CD4-positive, alpha-beta T cell (primary cell): ENCODE measurements at regions of chr17 and their contacts with region 1.

Region 1: DNA sequence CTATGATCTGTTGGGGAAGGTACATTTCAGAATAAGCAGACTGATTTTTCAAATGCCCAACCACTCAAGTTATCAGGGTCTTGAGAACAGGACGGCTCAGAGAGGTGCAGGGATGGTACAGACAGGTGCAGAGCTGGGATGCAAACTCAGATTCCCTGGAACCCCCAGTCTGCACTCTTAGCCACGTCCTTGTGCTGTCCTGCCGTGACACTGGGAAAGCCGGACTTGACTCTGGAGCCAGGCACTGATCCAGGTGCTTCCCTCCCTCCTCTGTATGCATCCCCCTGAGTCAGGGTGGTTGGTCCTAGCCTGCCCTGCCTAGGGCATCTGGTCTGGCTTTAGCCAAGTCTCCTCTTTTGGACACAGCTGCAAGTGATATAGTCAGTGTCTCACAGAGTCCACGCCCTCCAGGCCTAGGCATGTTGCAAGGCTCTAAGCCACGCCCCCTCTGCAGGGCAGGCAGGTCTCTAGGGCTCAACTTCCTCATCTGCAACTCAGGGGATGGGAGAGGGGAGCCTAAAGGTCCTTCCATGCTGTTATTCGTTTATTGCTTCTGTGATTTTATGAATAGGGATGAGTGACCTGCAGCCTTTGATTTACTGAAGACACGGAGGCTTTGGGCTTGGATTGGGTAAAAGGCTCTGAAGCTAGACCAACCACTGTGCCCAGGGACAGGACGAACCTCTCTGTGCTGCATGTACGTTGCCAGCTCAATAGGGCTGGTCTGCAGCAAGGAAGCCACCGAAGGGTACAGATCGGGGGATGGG is 97.3 kb downstream of the SDK2 start:
- DNase-seq: peak in 12 of 14 experiments; percentile 4 to 64 (median 36)
- ATAC-seq: peak; percentile 79
- H3K4me3 ChIP-seq: no peak overlapping the region
- H3K4me3 Mint-ChIP-seq: no peak overlapping the region
- H3K27ac ChIP-seq: no peak overlapping the region
- H3K27ac Mint-ChIP-seq: no peak overlapping the region
- H3K4me1 ChIP-seq: no peaks in the 10 kb centered on the region
- H3K4me1 Mint-ChIP-seq: peaks cover 32% of the 10 kb centered on the region
- H3K27me3 ChIP-seq: no peaks in the 10 kb centered on the region
- H3K27me3 Mint-ChIP-seq: no peaks in the 10 kb centered on the region
- CTCF ChIP-seq: no peak

Region 2: DNA sequence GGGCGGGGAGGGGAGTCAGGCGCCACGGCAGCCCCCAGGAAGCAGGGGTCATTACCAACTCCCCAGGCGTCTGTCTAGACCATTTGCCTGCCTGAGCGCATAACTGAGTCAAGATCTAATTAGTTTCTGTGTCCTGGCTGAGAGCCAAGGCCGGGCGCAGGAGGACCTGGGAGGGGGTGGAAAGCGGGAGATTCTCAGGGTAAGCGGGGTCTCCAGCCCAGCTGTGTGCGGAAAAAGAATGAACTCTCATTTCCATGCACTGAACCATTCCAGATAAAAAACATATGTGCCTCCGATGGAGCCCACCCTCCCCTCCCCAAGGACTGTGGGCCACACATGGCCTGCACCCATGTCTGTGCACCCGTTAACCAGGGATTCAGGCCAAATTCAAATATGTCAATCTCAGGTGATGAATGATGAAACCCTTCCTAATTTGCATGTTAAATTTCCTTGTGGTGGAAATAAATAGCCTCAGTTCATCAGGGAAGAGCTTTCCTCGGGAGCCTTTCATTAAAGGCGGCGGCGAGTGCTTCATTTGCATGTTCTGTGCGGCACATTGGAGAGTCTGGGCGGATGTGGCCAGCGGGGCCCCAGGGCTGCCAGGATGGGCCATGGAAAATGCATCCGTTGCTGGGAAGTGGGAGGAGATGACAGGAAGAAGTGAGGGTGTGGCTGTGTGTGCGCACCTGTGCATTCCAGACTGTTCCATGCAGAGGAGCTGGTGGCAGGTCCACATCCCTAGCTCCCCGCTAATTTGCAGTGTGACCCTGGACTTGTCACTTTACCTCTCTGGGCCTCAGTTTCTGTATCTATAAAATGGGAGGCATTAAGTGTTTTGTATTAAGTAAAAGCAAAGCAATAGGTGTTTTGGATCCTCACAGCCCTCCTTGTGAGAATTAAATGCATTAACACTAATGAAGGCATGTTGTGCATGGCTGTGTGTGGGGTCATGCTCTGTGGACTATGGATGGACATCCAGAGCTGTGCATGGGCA is 53.8 kb before region 1 on chr17:
- CTCF ChIA-PET with region 1: no interaction called
- POLR2A ChIA-PET with region 1: no interaction called
- intact Hi-C with region 1: no loop called
- DNase-seq: no peak
- ATAC-seq: no peak
- H3K4me3 ChIP-seq: no peak overlapping the region
- H3K4me3 Mint-ChIP-seq: no peak overlapping the region
- H3K27ac ChIP-seq: no peak overlapping the region
- H3K27ac Mint-ChIP-seq: no peak overlapping the region
- H3K4me1 ChIP-seq: no peaks in the 10 kb centered on the region
- H3K4me1 Mint-ChIP-seq: no peaks in the 10 kb centered on the region
- H3K27me3 ChIP-seq: no peaks in the 10 kb centered on the region
- H3K27me3 Mint-ChIP-seq: no peaks in the 10 kb centered on the region
- CTCF ChIP-seq: no peak

Region 3: DNA sequence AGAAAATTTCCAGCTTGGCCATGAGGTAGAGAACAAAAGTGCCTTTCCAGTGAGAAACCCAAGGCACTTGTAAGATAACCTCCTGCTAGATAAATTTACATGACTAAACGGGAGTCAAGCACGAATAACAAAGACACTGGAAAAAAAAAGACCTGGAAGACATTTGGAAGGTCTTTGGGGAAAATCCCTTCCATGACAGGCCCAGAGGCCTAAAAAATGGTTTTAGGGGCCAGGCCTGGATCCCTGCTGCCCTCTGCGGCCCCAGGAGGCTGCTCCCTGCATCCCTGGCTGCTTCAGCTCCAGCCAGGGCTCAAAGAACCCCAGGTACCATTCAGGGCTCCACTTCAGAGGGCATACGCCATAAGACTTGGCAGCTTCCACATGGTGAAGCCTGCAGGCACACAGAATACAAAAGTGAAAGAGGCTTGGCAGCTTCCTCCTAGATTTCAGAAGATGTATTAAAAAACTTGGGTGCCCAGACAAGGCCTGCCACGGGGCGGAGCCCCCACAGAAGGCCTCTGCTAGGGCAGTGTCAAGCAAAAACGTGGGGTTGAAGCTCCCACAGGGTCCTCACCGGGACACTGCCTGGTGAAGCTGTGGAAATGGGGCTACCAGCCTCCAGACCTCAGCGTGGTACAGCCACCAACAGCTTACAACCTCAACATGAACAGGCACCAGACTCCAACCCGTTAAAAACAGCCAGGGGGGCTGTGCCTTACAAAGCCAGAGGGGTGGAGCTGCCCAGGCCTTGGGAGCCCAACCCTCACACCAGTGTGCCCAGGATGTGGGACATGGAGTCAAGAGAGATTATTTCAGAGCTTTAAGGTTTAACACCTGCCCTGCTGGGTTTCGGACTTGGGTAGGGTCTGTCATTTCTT is 20.2 kb after region 1 on chr17:
- CTCF ChIA-PET with region 1: no interaction called
- POLR2A ChIA-PET with region 1: interaction called, 11 read pairs
- intact Hi-C with region 1: no loop called
- DNase-seq: peak in 10 of 14 experiments; percentile 6 to 46 (median 32)
- ATAC-seq: peak; percentile 70
- H3K4me3 ChIP-seq: no peak overlapping the region
- H3K4me3 Mint-ChIP-seq: peak overlapping the region; percentile 38
- H3K27ac ChIP-seq: peak overlapping the region in 1 of 2 donors; percentile 51
- H3K27ac Mint-ChIP-seq: peak overlapping the region; percentile 85
- H3K4me1 ChIP-seq: peaks cover 8% of the 10 kb centered on the region
- H3K4me1 Mint-ChIP-seq: peaks cover 28% of the 10 kb centered on the region
- H3K27me3 ChIP-seq: no peaks in the 10 kb centered on the region
- H3K27me3 Mint-ChIP-seq: no peaks in the 10 kb centered on the region
- CTCF ChIP-seq: no peak